Activated T-helper 1 cell treated with anti-CD3 and anti-CD28 coated beads, Interleukin-12 subunit alpha, Interleukin-12 subunit beta, Interleukin-2, Interleukin-4 antibody, amounts not matched to agents 30 ng/mL and 10 ng/mL and 1 ng/mL, durations not matched to agents 14 hours and 24 hours and 36 hours (primary cell): ENCODE measurements at regions of chr2 and their contacts with region 1.

Region 1: DNA sequence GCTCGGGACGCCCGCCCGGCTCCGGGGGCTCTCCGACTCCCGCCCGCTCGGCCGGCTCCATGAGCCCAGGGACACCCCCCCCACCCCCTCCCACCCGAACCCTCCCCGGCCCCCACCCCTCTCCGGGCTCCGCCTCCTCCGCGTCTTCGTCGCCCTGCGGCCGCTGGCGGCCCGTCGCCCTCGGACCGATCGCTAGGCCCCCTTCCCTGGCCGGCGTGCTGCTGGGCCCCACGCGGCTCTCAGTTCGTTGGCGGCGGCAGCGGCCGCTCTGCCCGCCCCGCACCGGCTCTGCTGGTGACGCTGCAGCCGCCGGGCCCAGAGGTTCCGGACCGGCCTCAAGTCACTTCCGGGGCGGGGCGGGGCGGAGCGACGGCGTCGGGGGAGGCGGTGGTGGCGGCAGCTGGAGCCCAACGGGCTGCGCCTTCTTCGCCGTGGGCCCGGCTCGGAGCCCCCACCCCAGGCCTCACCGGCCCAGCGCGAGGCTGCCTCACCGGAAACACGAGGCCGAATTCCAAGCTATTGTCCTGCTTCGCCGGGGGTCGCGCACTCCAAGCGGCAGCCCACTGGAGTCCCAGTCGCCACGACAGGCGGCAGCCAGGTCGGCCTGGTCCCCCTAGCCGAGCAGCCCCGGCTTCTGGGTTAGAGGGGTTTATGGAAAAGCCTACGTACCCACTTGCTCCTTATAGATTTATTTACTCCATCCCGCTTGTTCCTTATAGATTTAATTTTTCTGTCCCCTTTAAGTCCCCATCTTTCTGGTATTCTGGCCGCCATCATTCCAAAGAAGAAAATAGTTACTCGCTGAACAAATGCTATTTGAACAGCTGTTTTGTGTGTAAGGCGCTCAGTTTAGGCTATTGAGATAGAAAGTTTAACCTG is at the start of gene PSME4:
- DNase-seq: peak; percentile 91
- H3K4me3 Mint-ChIP-seq: peak within 1 kb of the TSS; percentile 99
- H3K27ac Mint-ChIP-seq: peak within 1 kb of the TSS; percentile 99
- H3K4me1 Mint-ChIP-seq: peaks cover 39% of the 10 kb centered on the region
- H3K27me3 Mint-ChIP-seq: no peaks in the 10 kb centered on the region
- total RNA-seq, gene PSME4: 59.3 and 59.7 TPM in 2 replicates

Region 2: GRCh38 chr2:53767405-53768241 is 203.3 kb before region 1 on chr2 and contains the start of gene CHAC2:
- intact Hi-C with region 1: loop called (anchors 1 kb)
- DNase-seq: peak; percentile 82
- H3K4me3 Mint-ChIP-seq: peak within 1 kb of the TSS; percentile 96
- H3K27ac Mint-ChIP-seq: peak within 1 kb of the TSS; percentile 97
- H3K4me1 Mint-ChIP-seq: peaks cover 38% of the 10 kb centered on the region
- H3K27me3 Mint-ChIP-seq: no peaks in the 10 kb centered on the region
- total RNA-seq, gene CHAC2: 24.1 and 25.6 TPM in 2 replicates

Region 3: DNA sequence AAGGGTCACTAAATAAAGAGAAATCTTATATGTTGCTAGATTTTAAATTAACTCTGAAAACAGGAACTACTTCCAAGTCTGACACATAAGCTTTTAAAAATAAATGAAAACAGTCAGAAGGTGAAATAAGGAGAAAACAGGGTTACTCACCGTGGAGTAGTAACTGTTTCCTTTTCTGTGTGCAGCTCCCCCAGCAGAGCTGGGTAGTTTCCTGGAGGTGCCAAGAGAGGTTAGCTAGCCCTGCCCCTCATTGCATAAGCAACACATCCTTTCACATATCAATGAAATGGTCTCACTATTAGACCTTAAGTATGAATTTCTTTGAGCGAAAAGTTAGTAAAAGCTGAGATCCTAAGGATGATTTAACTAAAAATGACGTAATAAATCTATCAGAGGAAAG is 57.2 kb before region 1 on chr2:
- intact Hi-C with region 1: loop called (anchors 5 kb)
- DNase-seq: peak; percentile 15
- H3K4me3 Mint-ChIP-seq: no peak overlapping the region
- H3K27ac Mint-ChIP-seq: peak overlapping the region; percentile 74
- H3K4me1 Mint-ChIP-seq: peaks cover 22% of the 10 kb centered on the region
- H3K27me3 Mint-ChIP-seq: no peaks in the 10 kb centered on the region

Region 4: GRCh38 chr2:53994818-53995808 is 24.1 kb after region 1 on chr2:
- intact Hi-C with region 1: loop called (anchors 1 kb)
- DNase-seq: no peak
- H3K4me3 Mint-ChIP-seq: peak overlapping the region; percentile 43
- H3K27ac Mint-ChIP-seq: peak overlapping the region; percentile 56
- H3K4me1 Mint-ChIP-seq: peaks cover 18% of the 10 kb centered on the region
- H3K27me3 Mint-ChIP-seq: no peaks in the 10 kb centered on the region

Region 5: GRCh38 chr2:54052825-54053718 is 82.1 kb after region 1 on chr2:
- intact Hi-C with region 1: loop called (anchors 1 kb)
- DNase-seq: no peak
- H3K4me3 Mint-ChIP-seq: peak overlapping the region; percentile 40
- H3K27ac Mint-ChIP-seq: peak overlapping the region; percentile 64
- H3K4me1 Mint-ChIP-seq: peaks cover 20% of the 10 kb centered on the region
- H3K27me3 Mint-ChIP-seq: no peaks in the 10 kb centered on the region

Region 6: GRCh38 chr2:54330162-54330925 is 359.4 kb after region 1 on chr2:
- intact Hi-C with region 1: loop called (anchors 2 kb)
- DNase-seq: peak; percentile 86
- H3K4me3 Mint-ChIP-seq: peak overlapping the region; percentile 81
- H3K27ac Mint-ChIP-seq: peak overlapping the region; percentile 69
- H3K4me1 Mint-ChIP-seq: peaks cover 17% of the 10 kb centered on the region
- H3K27me3 Mint-ChIP-seq: peaks cover 19% of the 10 kb centered on the region